ENCODE measurements at regions of chr2 and their contacts with region 1.

Region 1: DNA sequence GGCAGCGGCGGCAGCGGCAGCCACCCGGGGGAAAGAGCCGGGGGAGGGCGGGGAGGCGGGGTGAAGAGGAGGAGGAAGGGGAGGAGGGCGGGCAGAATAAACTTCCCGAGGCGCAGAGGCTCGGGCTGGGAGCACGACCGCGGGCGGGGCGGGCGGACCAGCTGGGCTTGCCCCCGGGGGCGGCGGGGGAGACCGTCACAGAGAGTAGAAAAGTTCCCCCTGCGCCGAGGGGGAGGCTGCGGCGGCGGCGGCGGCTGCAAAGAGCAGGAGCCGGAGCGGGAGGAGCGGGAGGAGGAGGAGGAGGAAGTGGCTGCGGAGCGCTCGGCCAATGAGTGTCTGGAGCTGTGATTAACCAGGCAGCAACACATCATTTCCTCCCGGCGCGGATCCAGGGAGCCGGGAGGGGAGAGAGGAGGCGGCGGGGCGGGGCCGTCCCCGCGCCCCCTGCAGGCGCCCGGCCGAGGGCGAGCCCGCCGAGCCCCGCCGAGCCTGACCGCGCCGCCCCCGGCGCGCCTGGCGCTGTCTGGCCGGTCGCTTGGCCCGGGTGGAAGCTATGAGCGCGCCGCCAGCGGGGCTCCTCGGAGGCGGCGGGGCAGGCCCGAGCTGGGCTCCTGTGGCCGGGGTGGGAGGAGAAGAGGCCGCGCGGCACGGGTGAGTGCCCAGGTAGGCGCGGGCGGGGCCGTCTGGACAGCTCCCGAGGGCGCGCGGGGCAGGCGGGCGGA is at the start of gene ACVR1:
- DNase-seq: peak; percentile 98
- ATAC-seq: peak; percentile 86
- H3K4me3 ChIP-seq: peak within 1 kb of the TSS; percentile 98
- H3K27ac ChIP-seq: peak within 1 kb of the TSS; percentile 98
- H3K4me1 ChIP-seq: peaks cover 8% of the 10 kb centered on the region
- H3K27me3 ChIP-seq: no peaks in the 10 kb centered on the region
- CTCF ChIP-seq: peak; percentile 52
- POLR2A ChIP-seq: 0 out of 2 replicates have a peak, but pooled peaks have one; percentile 40
- RAD21 ChIP-seq: peak; percentile 33
- total RNA-seq, gene ACVR1: 21.1 and 24.2 TPM in 2 replicates

Region 2: DNA sequence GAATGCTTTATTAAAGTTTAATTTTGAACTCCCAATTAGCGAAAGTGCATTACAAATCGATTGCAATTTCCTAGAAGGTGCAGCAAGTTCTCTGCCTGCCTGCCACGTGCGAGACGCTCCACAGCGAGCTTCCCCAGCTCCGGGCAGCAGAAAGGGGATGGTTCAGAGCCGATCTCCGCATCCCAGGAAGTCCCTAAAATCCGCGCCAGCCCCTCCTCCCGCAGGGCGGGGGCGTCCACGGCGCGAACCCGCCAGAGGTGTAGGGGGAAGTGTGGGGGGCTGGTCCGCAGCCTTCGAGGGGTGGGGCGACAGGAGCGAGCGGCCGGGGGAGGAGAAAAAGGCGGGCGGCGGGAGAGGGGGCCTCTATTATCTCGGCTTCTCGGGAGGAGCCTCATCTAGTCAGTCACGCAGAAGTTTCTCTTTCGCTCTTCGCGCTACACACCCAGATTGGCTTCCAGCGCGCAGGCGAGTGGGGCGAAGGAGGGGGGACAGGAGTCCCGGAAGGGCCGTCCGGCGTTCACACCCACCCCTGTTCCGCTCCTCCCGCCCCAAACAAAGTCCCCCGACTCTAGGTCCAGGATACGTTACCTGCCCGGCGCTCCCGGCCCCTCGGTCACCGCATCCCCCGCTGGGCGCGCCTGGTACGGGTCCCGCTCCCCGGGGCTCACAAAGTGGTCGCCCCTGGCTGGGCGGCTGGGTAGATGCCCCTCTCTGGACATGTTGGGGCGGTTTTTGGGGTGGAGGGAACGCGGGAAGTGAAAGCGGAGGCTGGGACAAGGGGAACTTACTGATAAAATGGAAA is 1534.6 kb before region 1 on chr2:
- CTCF ChIA-PET with region 1: no interaction called
- POLR2A ChIA-PET with region 1: no interaction called
- dilution Hi-C with region 1: no loop called
- in situ Hi-C with region 1: loop called (anchors 25 kb)
- intact Hi-C with region 1: no loop called
- DNase-seq: peak; percentile 94
- ATAC-seq: peak; percentile 85
- H3K4me3 ChIP-seq: peak overlapping the region; percentile 85
- H3K27ac ChIP-seq: peak overlapping the region; percentile 96
- H3K4me1 ChIP-seq: no peaks in the 10 kb centered on the region
- H3K27me3 ChIP-seq: no peaks in the 10 kb centered on the region
- CTCF ChIP-seq: no peak
- POLR2A ChIP-seq: peak; percentile 94
- RAD21 ChIP-seq: peak; percentile 18; the same call in 1 of the 2 replicates

Region 3: DNA sequence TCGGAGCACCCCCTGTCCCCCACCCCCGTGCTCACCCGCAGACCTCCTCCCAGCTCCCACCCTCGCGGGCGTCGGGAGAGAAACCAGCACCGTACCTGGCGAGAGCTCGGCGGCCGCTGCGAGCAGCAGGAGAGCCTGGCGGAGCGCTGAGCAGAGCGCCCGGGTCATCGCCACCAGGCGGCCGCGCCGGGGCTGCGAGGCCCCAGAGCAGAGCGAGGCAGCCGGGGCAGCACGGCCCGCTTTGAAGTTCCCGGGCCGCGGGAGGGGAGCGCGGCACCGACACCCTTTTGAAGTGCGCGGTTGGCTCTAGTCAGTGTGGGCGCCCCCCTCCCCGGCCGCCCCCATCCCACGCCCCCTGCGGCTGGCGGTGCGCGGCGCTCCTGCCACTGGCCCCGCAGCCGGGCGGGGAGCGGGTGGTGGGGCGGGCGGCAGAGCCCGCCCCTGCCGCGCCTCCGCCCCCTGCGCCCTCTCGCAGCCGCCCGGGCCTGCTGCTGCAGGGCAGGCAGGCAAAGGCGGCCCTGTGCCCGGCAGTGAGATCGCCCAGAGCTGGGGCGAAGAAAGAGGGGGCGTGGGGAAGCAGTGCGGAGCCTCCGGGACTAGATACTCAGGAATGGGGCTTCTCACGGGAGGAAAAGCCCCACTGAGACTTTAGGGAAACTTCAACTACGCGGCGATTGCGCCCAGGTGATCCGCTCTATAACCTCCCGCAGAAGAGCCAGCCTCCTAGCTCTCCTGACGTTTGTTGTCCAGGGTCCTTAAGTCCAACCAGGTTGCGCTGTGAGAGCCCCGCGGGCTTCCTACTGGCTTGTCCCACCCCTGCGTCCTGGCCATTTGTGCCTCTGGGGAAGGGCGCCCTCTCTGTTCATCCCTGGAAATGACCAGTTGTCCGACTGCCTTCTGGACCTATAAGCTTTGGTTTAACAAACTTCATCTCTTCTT is 247.5 kb before region 1 on chr2 and contains the start of gene ACVR1C:
- CTCF ChIA-PET with region 1: no interaction called
- POLR2A ChIA-PET with region 1: interaction called, 3 read pairs
- dilution Hi-C with region 1: no loop called
- in situ Hi-C with region 1: no loop called
- intact Hi-C with region 1: loop called (anchors 2 kb)
- DNase-seq: peak; percentile 37
- ATAC-seq: peak; percentile 95
- H3K4me3 ChIP-seq: peak within 1 kb of the TSS; percentile 56
- H3K27ac ChIP-seq: no peak within 1 kb of the TSS
- H3K4me1 ChIP-seq: peaks cover 4% of the 10 kb centered on the region
- H3K27me3 ChIP-seq: peaks cover 12% of the 10 kb centered on the region
- CTCF ChIP-seq: peak; percentile 44
- POLR2A ChIP-seq: no peak
- RAD21 ChIP-seq: peak; percentile 38; the same call in 1 of the 2 replicates
- total RNA-seq, gene ACVR1C: 0.18 and 0.28 TPM in 2 replicates

Region 4: GRCh38 chr2:157784169-157784822 is 91.9 kb before region 1 on chr2:
- CTCF ChIA-PET with region 1: interaction called, 5 read pairs
- POLR2A ChIA-PET with region 1: no interaction called
- dilution Hi-C with region 1: no loop called
- in situ Hi-C with region 1: loop called (anchors 5 kb)
- intact Hi-C with region 1: loop called (anchors 1 kb)
- DNase-seq: peak; percentile 21
- ATAC-seq: peak; percentile 31
- H3K4me3 ChIP-seq: no peak overlapping the region
- H3K27ac ChIP-seq: no peak overlapping the region
- H3K4me1 ChIP-seq: peaks cover 14% of the 10 kb centered on the region
- H3K27me3 ChIP-seq: no peaks in the 10 kb centered on the region
- CTCF ChIP-seq: no peak
- POLR2A ChIP-seq: no peak
- RAD21 ChIP-seq: no peak

Region 5: DNA sequence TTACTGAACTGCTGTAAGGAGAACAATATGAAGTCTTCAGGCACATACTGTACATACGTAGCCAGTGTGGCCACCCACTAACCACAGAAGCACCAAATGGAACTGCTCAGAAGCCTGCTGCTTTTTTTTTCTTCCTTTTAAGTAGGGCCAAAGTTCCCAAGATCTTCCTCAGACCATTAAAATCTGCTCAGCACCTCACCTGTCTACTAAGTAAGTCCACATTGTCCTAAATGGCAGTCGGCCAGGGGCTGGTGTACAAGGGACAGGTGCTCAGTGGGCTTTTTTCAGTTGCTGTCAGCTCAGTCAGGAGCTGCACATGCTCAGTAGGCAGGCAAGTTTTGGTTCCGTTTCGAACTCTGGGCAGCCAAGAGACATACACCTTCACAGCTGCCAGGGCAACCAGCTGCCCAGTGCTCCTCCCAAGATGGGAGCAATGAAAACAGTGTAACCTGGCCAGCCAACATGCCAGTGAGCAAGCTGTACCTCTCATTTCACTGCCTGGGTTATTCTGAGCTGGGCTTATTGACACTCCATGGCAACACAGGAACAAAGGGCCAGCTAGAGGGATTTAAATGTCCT is 86.2 kb before region 1 on chr2:
- CTCF ChIA-PET with region 1: interaction called, 4 read pairs
- POLR2A ChIA-PET with region 1: no interaction called
- dilution Hi-C with region 1: no loop called
- in situ Hi-C with region 1: loop called (anchors 5 kb)
- intact Hi-C with region 1: loop called (anchors 1 kb)
- DNase-seq: no peak
- ATAC-seq: no peak
- H3K4me3 ChIP-seq: no peak overlapping the region
- H3K27ac ChIP-seq: no peak overlapping the region
- H3K4me1 ChIP-seq: peaks cover 25% of the 10 kb centered on the region
- H3K27me3 ChIP-seq: no peaks in the 10 kb centered on the region
- CTCF ChIP-seq: no peak
- POLR2A ChIP-seq: no peak
- RAD21 ChIP-seq: no peak

Region 6: DNA sequence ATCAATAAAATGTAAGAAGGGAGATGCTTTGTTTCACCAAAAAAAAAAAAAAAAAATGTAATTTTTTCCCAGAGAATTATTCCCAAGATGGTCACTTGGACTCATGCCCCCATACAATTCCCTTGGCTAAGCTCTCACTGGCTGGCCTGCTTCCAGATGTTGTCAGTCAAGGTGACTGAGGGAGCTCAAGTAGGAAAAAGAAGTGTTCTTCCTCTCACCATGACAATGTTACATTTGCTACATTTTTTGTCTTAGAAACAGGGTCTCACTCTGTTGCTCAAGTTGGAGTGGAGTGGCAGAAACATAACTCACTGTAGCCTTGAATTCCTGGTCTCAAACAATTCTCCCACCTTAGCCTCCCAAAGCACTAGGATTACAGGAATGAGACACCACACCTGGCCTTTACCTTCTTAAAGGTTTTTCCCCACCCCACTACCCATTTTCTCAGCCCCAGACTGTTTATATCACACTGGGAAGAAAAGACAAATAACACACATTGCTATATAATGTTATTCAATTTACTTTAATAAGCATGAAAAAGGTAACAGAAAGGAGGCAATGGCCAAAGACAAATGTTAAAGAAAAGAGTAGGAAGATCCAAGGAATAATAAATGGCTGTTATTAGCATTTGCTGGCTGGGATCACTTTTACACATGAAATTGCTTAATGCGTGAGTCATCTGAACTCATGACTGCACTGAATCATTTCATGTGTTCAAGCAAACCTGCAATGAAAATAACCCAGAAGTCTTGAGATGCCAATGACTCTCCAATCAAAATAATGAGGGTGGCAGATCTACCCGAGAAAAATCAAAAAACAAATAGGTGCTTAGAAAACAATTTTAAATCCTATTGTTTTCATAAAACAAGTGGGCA is 45.3 kb before region 1 on chr2:
- CTCF ChIA-PET with region 1: no interaction called
- POLR2A ChIA-PET with region 1: no interaction called
- dilution Hi-C with region 1: no loop called
- in situ Hi-C with region 1: no loop called
- intact Hi-C with region 1: loop called (anchors 2 kb)
- DNase-seq: peak; percentile 97
- ATAC-seq: peak; percentile 85
- H3K4me3 ChIP-seq: no peak overlapping the region
- H3K27ac ChIP-seq: peak overlapping the region; percentile 86; the same call in 1 of the 2 replicates
- H3K4me1 ChIP-seq: peaks cover 10% of the 10 kb centered on the region
- H3K27me3 ChIP-seq: no peaks in the 10 kb centered on the region
- CTCF ChIP-seq: no peak
- POLR2A ChIP-seq: no peak
- RAD21 ChIP-seq: no peak

Region 7: DNA sequence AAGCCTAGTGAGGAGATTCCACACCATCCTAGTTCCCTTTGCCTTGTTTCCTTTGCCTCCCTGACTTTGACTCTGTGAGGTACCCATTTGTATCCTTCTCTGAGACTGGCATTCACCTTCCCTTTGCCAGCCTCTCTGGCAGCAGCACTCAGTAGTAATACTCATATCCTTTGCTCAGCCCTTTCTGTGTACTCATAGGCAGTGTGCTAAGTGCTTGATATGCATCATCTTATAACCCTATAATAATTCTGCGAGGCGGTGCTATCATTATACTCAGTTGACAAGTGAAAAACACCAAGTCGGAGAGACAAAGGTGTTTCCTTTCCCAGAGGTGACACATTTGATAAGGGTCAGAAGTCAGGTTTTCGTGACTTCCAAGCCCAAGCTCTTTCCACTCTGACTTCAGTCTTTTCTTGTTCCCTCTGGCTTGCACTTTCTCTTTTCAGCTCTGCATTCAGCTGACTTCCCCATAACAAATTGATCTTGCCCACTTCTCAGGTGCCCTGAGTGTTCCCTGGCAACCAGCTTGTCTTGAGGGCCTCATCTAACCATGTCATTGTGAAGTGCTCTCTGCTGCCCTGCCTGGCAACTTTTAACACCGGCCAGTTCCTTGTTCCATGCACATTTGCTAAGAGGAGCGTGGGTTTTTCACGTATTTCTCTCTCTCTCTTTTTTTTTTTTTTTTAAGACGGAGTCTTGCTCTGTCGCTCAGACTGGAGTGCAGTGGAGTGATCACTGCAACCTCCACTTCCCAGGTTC is 130.9 kb after region 1 on chr2:
- CTCF ChIA-PET with region 1: no interaction called
- POLR2A ChIA-PET with region 1: no interaction called
- dilution Hi-C with region 1: no loop called
- in situ Hi-C with region 1: no loop called
- intact Hi-C with region 1: loop called (anchors 10 kb)
- DNase-seq: no peak
- ATAC-seq: no peak
- H3K4me3 ChIP-seq: no peak overlapping the region
- H3K27ac ChIP-seq: no peak overlapping the region
- H3K4me1 ChIP-seq: no peaks in the 10 kb centered on the region
- H3K27me3 ChIP-seq: peaks cover 2% of the 10 kb centered on the region
- CTCF ChIP-seq: no peak
- POLR2A ChIP-seq: no peak
- RAD21 ChIP-seq: no peak

Region 8: GRCh38 chr2:158099716-158100115 is 223.5 kb after region 1 on chr2:
- CTCF ChIA-PET with region 1: no interaction called
- POLR2A ChIA-PET with region 1: no interaction called
- dilution Hi-C with region 1: no loop called
- in situ Hi-C with region 1: no loop called
- intact Hi-C with region 1: no loop called
- DNase-seq: peak; percentile 4
- ATAC-seq: no peak
- H3K4me3 ChIP-seq: no peak overlapping the region
- H3K27ac ChIP-seq: no peak overlapping the region
- H3K4me1 ChIP-seq: no peaks in the 10 kb centered on the region
- H3K27me3 ChIP-seq: no peaks in the 10 kb centered on the region
- CTCF ChIP-seq: no peak
- POLR2A ChIP-seq: no peak
- RAD21 ChIP-seq: no peak

Measured in IMR-90 (cell line).